Activated CD4-positive, alpha-beta T cell treated with anti-CD3 and anti-CD28 coated beads for 36 hours (primary cell): ENCODE measurements at regions of chr3 and their contacts with region 1.

Region 1: DNA sequence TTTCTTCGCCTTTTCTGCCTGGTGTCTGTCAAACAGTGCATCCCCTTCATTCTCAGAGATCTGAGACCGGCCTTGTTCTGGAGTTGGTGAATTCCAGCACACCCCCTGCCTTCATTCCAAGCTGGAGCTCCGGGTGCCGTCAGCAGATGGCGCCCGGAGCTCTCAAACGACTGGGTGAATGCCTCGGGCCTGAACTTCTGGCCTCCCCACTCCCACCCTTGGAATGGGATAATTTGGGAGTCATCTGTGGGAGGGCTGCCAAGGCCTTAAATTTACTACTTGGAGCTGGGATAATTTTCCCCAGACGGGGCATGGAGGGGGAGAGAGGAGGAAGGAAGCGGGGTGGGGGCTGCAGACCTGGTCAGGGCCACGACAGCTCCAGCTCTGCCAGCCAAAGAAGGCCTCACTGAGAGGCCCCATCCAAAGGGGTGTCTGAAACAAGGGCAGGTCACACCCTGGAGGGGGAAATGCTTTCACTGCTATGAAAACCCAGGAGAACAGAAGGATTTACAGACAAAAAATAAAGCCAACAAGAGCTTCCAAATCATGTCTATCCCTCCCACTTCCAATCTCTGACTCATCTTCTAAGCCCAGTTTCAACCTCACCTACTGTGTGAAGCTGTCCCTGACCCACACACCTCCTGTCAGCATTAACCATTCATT is 187.9 kb downstream of the OPA1 start:
- DNase-seq: peak; percentile 65
- ATAC-seq: peak; percentile 53
- H3K4me3 Mint-ChIP-seq: no peak overlapping the region
- H3K27ac Mint-ChIP-seq: no peak overlapping the region
- H3K4me1 Mint-ChIP-seq: peaks cover 6% of the 10 kb centered on the region
- H3K27me3 Mint-ChIP-seq: peaks cover 26% of the 10 kb centered on the region

Region 2: GRCh38 chr3:193768070-193768394 is 12.9 kb before region 1 on chr3:
- CTCF ChIA-PET with region 1: interaction called, 23 read pairs
- POLR2A ChIA-PET with region 1: no interaction called
- intact Hi-C with region 1: no loop called
- DNase-seq: no peak
- ATAC-seq: no peak
- H3K4me3 Mint-ChIP-seq: no peak overlapping the region
- H3K27ac Mint-ChIP-seq: no peak overlapping the region
- H3K4me1 Mint-ChIP-seq: no peaks in the 10 kb centered on the region
- H3K27me3 Mint-ChIP-seq: peaks cover 2% of the 10 kb centered on the region

Region 3: DNA sequence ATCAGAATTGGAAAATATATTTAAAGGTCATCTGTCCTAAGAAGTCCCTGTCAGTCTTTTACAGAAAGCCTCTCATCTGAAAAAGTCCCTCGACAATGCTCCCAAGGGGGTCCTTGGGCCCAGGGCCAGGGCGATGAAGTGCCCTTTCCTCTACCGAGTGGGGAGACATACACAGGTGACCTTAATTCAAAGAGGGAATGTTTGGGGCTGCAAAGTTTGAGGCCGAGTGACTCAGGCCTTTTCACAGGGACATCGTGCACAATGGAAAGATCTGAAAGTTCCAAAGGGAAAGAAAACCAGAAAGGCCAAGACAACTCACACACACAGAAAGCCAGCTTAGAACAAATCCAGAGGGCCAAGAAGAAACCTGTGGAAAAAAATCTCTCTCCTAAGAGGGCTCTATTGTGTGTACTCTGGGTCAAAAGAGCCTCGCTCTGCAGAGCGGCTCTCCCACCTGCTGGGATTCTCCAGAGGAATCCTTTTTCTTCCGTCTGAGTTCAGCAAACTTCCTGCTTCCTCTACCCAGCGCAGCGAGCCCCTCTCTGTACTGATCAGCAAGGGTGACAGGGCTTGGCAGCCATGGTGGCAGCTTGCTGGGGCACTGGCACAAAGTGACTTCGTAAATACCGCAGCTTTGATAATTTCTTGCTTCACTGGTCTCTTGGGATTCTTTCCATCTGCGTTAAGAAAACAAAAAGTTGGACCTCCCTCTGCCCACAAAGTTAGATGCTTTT is 71.2 kb after region 1 on chr3:
- CTCF ChIA-PET with region 1: no interaction called
- POLR2A ChIA-PET with region 1: no interaction called
- intact Hi-C with region 1: no loop called
- DNase-seq: no peak
- ATAC-seq: no peak
- H3K4me3 Mint-ChIP-seq: no peak overlapping the region
- H3K27ac Mint-ChIP-seq: no peak overlapping the region
- H3K4me1 Mint-ChIP-seq: no peaks in the 10 kb centered on the region
- H3K27me3 Mint-ChIP-seq: no peaks in the 10 kb centered on the region